ENCODE measurements at regions of chr3 and their contacts with region 1.

Region 1: GRCh38 chr3:59326246-59327024 is 276.6 kb upstream of the CFAP20DC start:
- DNase-seq: peak; percentile 2
- H3K4me3 ChIP-seq: no peak overlapping the region
- H3K27ac ChIP-seq: no peak overlapping the region
- H3K4me1 ChIP-seq: no peaks in the 10 kb centered on the region
- CTCF ChIP-seq: peak; percentile 74

Region 2: DNA sequence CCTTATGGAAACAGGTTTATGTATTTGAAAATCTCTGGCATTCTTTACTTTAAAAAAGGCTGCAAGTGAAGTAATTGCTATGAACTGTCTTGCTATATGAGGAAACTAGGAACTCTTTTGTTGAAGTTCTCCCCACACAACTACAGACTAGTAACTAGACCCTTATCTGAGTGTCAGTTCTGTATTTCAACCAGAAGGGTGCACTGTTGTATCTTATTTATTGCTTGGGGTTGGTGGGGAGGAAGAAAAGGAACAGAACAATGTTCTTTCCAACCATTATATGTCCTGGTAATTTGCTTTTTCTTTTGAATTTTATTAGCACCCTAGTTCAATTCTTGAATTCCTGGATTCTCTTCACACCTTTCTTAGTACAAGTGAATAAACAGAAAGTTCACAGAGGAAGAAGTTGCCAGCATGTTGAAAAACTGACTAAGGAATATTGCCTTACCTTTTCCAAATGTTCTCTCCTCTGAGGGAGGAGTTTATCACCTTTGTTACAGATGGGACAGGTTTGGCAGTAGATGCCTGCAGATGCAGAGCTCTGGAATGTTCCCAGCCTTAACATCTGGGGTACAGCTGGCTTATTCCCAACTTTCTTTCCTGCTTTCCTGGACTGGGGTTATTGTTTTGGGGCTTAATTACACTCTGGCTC is 114.2 kb before region 1 on chr3:
- CTCF ChIA-PET with region 1: no interaction called
- POLR2A ChIA-PET with region 1: no interaction called
- intact Hi-C with region 1: loop called (anchors 10 kb)
- DNase-seq: peak; percentile 40
- H3K4me3 ChIP-seq: no peak overlapping the region
- H3K27ac ChIP-seq: no peak overlapping the region
- H3K4me1 ChIP-seq: no peaks in the 10 kb centered on the region
- CTCF ChIP-seq: peak; percentile 83